ENCODE measurements at regions of chrX and their contacts with region 1.

Region 1: DNA sequence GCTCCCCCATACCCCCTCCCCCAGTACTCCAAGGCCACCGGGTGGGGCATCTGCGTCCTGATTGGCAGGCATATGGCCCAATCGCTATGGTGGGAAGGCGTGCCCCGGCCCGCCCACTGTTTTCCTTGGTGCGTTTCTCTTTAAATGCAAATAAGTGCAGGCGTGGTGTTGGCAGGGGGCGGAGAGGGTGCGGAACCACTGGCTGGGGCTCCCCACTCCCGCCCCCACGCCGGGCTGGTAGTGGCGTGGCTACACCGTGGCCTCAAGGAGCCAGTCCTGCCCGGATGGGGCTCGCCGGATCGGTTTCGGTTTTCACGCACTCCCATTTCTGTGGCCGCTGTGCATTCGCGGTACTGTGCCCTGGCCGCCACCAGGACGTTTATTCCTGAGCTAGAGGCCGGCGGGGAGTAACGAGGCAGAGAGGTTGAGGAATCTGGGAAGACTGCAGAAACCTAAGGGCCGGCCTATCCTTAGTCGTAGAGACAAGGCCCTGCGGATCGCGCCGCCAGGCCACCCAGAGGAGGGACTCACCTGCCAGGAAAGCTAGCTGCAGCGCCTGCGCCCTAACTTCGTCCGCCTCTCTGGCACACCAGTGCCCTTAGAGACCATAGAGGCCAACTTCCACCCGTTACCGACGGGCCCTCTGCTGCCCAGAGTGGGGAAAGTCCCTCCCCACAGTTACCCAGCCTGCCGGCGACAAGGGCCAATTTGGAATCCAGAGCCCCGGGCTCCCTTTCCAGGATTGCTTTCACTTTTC is 405 bp upstream of the AMER1 start:
- DNase-seq: peak; percentile 92 to 95 (median 93)
- ATAC-seq: peak; percentile 92 to 96 (median 94)
- H3K4me3 ChIP-seq: peak overlapping the region; percentile 19 to 97 (median 72)
- H3K27ac ChIP-seq: peak overlapping the region; percentile 82 to 98 (median 91)
- H3K4me1 ChIP-seq: peaks cover 0 to 34% (median 10%) of the 10 kb centered on the region in 12 donors
- H3K27me3 ChIP-seq: peaks cover 0 to 3% (median 0%) of the 10 kb centered on the region in 9 donors
- CTCF ChIP-seq: peak in 3 of 12 donors; percentile 11 to 27 (median 15)
- POLR2A ChIP-seq: peak in 1 of 2 donors; percentile 69

Region 2: DNA sequence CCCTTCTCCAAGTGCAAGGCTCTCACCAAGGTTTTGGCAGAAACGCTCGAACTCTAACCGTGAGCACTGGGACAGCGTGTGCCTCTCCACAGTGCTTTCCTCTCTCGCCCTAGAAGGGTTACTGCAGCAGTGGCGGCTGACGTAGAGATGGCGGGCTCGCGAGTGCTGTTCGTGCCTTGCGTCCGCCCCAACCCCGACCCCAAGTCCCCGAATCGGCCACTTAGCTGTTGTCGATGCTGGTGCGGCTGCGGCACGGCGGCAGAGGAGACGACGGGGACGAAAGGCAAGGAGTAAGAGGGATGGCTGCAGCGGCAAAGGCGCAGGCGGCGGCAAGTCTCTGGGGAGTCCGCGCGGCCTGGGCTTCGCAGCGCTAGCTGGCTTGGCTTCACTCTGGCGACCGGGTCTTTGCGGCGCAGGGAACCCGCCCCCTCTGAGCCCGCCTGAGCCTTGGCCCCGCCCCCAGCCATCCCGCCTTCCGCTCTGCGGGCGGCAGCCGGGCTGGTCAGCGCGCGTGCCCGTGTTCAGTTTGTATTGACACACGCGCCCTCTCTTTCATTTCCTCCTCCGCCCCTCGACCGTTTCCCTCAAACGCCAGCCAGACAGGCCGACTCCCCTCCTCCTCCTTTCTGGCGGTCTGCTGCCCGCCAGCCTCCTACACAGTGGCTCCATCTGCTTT is 854.8 kb before region 1 on chrX and contains the start of gene SPIN4:
- intact Hi-C with region 1: loop called in 1 of 10 experiments (anchors 5 kb)
- DNase-seq: peak; percentile 85 to 90 (median 86)
- ATAC-seq: peak; percentile 94 to 99 (median 99)
- H3K4me3 ChIP-seq: peak within 1 kb of the TSS; percentile 24 to 92 (median 62)
- H3K27ac ChIP-seq: peak within 1 kb of the TSS in 9 of 12 donors; percentile 29 to 82 (median 56)
- H3K4me1 ChIP-seq: peaks cover 0 to 9% (median 0%) of the 10 kb centered on the region in 12 donors
- H3K27me3 ChIP-seq: peaks cover 0 to 5% (median 0%) of the 10 kb centered on the region in 9 donors
- CTCF ChIP-seq: no peak
- POLR2A ChIP-seq: peak in 1 of 2 donors; percentile 54
- total RNA-seq, gene SPIN4: 0.31 to 1.7 (median 0.72) TPM

Region 3: DNA sequence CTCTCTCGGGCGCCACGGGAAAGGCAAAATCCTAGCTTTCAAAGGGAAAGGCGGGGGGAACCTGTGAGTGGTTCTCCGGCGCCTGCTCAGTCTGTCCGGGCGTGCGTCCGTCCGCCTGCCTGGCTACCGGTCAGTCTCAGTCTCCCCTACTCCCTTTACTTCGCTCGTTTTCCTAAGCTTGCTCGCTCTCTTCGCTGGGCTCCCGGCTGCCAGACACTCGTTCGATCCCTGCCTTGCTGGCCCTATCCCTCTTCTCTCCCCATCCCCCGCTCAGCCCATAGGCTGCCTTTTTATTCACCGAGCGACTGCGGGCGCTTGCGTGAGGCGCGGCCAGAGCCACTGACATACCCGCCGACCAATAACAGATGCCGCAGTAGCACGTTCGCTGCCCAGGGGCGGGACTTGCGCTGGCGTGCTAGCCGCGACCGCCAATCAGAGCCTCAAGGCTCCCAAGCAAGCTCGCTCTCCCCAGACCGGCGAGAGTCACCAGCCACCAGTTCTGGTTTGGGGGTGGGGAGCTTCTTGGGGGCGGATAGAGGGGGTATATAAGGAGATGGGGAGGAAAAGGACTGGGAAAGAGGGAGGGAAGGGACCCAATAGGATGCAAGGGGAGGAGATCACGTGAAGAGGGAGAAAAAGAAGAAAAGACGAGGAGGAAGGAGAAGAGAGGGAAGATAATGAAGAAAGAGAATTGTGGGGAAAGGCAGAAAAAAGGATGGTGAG is 450.9 kb before region 1 on chrX:
- intact Hi-C with region 1: loop called in 1 of 10 experiments (anchors 10 kb)
- DNase-seq: peak; percentile 91 to 95 (median 94)
- ATAC-seq: peak; percentile 97 to 99 (median 98)
- H3K4me3 ChIP-seq: peak overlapping the region; percentile 8 to 89 (median 68)
- H3K27ac ChIP-seq: peak overlapping the region; percentile 67 to 96 (median 90)
- H3K4me1 ChIP-seq: peaks cover 0 to 27% (median 4%) of the 10 kb centered on the region in 12 donors
- H3K27me3 ChIP-seq: peaks cover 0 to 4% (median 0%) of the 10 kb centered on the region in 9 donors
- CTCF ChIP-seq: no peak
- POLR2A ChIP-seq: peak; percentile 27 to 84

Region 4: GRCh38 chrX:64093761-64094160 is 112.2 kb before region 1 on chrX:
- intact Hi-C with region 1: loop called in 2 of 10 experiments (anchors 10 kb)
- DNase-seq: no peak
- ATAC-seq: no peak
- H3K4me3 ChIP-seq: no peak overlapping the region
- H3K27ac ChIP-seq: no peak overlapping the region
- H3K4me1 ChIP-seq: no peaks in the 10 kb centered on the region
- H3K27me3 ChIP-seq: no peaks in the 10 kb centered on the region
- CTCF ChIP-seq: peak in 11 of 12 donors; percentile 8 to 54 (median 28)
- POLR2A ChIP-seq: no peak

Region 5: DNA sequence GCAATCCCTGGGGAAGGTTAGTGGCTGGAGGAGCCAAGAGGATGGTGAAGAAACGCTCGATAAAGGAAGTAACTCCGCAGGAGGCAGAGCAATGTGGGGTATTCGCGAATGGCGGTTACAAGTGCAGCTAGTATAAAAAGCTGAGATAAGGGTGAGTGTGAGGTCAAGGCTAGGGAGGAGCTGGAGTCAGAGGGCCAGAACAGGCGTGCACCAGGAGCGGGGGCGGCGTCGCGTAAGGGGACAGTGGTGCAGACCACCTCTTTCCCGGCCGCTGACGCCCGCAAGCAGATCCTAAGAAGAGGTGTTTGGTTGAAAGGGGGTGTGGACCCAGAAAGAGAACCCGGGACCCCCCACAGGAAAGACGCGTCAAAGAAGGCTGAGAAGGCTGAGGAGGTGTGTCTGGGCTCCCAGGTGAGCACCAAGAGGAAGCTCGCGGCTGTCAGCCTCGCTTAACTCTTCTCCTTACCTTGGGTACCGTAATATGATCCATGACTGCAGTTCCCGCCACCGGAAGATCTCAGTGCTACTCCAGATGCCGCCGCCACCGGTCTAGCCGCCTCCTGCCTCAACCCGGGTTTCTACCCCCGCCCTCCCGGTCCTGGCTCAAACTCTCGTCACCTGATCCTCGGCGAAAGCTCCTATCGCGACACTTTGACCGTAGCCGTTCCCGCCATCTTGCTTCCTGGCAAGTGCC is 189.1 kb after region 1 on chrX and contains the start of gene MTMR8:
- intact Hi-C with region 1: loop called in 1 of 10 experiments (anchors 10 kb)
- DNase-seq: peak; percentile 66 to 75 (median 68)
- ATAC-seq: peak; percentile 67 to 93 (median 90)
- H3K4me3 ChIP-seq: peak within 1 kb of the TSS; percentile 43 to 82 (median 66)
- H3K27ac ChIP-seq: peak within 1 kb of the TSS in 6 of 12 donors; percentile 12 to 58 (median 21)
- H3K4me1 ChIP-seq: peaks cover 0 to 4% (median 0%) of the 10 kb centered on the region in 12 donors
- H3K27me3 ChIP-seq: peaks cover 0 to 3% (median 0%) of the 10 kb centered on the region in 9 donors
- CTCF ChIP-seq: no peak
- POLR2A ChIP-seq: no peak
- total RNA-seq, gene MTMR8: 0.19 to 1.5 (median 0.56) TPM in 8 of 9 donors, not detected in the other

Region 6: DNA sequence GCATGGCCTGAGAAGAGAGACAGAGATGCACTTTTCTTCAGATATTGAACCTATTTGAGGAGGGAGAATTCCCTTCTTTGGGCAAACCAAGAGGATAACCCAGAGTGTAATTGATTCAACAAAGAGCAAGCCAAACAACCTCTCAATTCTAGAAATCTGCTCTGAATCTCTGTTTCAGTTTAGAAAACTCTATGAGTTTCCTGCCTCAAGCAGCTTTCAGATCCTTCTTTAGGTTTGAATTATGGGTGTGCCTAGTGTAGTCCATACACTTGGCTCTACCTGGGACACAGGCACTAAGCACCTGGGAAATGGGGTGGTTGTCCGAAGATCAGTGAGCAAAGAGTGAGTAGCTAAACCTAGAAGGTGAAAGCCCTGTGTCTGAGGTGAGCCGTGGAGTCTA is 241.3 kb after region 1 on chrX:
- intact Hi-C with region 1: no loop called
- DNase-seq: no peak
- ATAC-seq: no peak
- H3K4me3 ChIP-seq: no peak overlapping the region
- H3K27ac ChIP-seq: no peak overlapping the region
- H3K4me1 ChIP-seq: no peaks in the 10 kb centered on the region
- H3K27me3 ChIP-seq: peaks cover 0 to 3% (median 0%) of the 10 kb centered on the region in 9 donors
- CTCF ChIP-seq: no peak
- POLR2A ChIP-seq: no peak

Region 7: GRCh38 chrX:64662876-64663275 is 457.0 kb after region 1 on chrX:
- intact Hi-C with region 1: no loop called
- DNase-seq: no peak
- ATAC-seq: no peak
- H3K4me3 ChIP-seq: no peak overlapping the region
- H3K27ac ChIP-seq: no peak overlapping the region
- H3K4me1 ChIP-seq: no peaks in the 10 kb centered on the region
- H3K27me3 ChIP-seq: no peaks in the 10 kb centered on the region
- CTCF ChIP-seq: no peak
- POLR2A ChIP-seq: no peak

Measured in heart left ventricle (tissue), 16 donors.